H1 (cell line): ENCODE measurements at regions of chr2 and their contacts with region 1.

Region 1: DNA sequence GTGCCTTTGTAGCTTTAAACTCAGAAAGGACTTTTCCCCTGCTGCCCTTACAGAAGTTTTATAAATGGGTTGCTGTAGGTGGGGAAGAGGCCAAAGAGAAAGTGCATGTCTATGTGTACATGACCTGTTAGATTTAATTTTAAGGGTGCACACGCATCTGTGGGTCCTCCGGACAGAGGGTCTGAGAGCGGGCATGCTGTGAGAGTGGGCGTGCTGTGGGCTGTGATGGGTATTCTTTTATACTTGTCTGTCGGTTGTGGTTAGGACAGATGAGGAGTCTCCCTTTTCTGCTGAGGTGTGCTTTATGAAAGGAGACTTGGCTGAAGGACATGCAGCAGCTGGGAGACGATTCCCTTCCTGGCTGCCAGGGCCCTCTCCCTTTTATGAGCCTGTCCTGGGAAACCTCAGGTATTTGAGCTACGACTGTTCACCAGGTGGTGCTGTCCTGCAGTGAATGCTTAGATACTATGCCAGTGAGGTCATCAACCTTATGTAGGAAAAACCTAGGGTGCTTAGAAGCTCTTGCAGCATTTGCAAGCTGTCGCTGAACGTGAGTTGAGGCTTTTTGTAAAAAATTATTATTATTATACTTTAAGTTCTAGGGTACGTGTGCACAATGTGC is 67.5 kb downstream of the TANC1 start:
- DNase-seq: peak in 1 of 2 experiments; percentile 58
- H3K4me3 ChIP-seq: no peak overlapping the region
- H3K27ac ChIP-seq: no peak overlapping the region
- H3K4me1 ChIP-seq: peaks cover 2 to 10% (median 5%) of the 10 kb centered on the region in 4 experiments
- H3K27me3 ChIP-seq: no peaks in the 10 kb centered on the region
- CTCF ChIP-seq: peak; percentile 39 to 81 (median 67)
- EP300 ChIP-seq: 0 out of 3 replicates have a peak, but pooled peaks of 1 of the 2 experiments have one; percentile 37
- POLR2A ChIP-seq: no peak
- RAD21 ChIP-seq: peak; percentile 84 to 91

Region 2: DNA sequence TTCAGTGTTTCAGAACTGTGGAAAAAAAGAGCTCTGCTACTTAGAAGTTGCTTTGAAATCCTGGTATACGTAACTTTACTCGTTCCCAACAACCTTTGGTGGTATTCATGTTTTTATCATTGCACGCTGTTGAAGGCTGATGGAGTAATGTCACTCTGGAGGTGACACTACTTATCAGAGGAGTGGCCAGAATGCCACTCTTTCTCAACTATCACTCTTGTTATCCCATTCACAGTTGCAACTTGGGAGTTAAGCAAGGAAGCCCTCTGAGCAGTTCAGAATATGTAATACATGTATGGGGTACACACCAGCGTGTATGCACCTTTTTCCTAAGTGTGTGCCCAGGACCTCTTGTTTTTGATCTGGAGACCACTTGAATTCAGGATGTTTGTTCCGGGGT is 13.9 kb before region 1 on chr2:
- CTCF ChIA-PET with region 1: interaction called, 13 read pairs
- POLR2A ChIA-PET with region 1: no interaction called
- DNase-seq: no peak
- H3K4me3 ChIP-seq: no peak overlapping the region
- H3K27ac ChIP-seq: no peak overlapping the region
- H3K4me1 ChIP-seq: 0 out of 7 replicates have a peak, but pooled peaks cover 0 to 2% (median 0%) of the 10 kb centered on the region in 4 experiments
- H3K27me3 ChIP-seq: no peaks in the 10 kb centered on the region
- CTCF ChIP-seq: no peak
- EP300 ChIP-seq: no peak
- POLR2A ChIP-seq: no peak
- RAD21 ChIP-seq: no peak

Region 3: GRCh38 chr2:159053161-159054031 is 17.5 kb after region 1 on chr2:
- CTCF ChIA-PET with region 1: interaction called, 27 read pairs
- POLR2A ChIA-PET with region 1: interaction called, 3 read pairs
- DNase-seq: no peak
- H3K4me3 ChIP-seq: no peak overlapping the region
- H3K27ac ChIP-seq: no peak overlapping the region
- H3K4me1 ChIP-seq: peaks cover 0 to 2% (median 2%) of the 10 kb centered on the region in 4 experiments; a peak in 3 of 7 replicates
- H3K27me3 ChIP-seq: no peaks in the 10 kb centered on the region
- CTCF ChIP-seq: no peak
- EP300 ChIP-seq: no peak
- POLR2A ChIP-seq: no peak
- RAD21 ChIP-seq: no peak

Region 4: GRCh38 chr2:159124441-159124911 is 88.6 kb after region 1 on chr2:
- CTCF ChIA-PET with region 1: interaction called, 79 read pairs
- POLR2A ChIA-PET with region 1: no interaction called
- DNase-seq: no peak
- H3K4me3 ChIP-seq: no peak overlapping the region
- H3K27ac ChIP-seq: no peak overlapping the region
- H3K4me1 ChIP-seq: 0 out of 7 replicates have a peak, but pooled peaks cover 0 to 3% (median 0%) of the 10 kb centered on the region in 4 experiments
- H3K27me3 ChIP-seq: no peaks in the 10 kb centered on the region
- CTCF ChIP-seq: no peak
- EP300 ChIP-seq: no peak
- POLR2A ChIP-seq: no peak
- RAD21 ChIP-seq: no peak